Body of pancreas (tissue), 4 donors: ENCODE measurements at regions of chr18 and their contacts with region 1.

Region 1: GRCh38 chr18:79988451-79989194 is at the start of gene TXNL4A:
- DNase-seq: peak; percentile 85 to 88 (median 88)
- ATAC-seq: peak; percentile 98
- H3K4me3 ChIP-seq: peak within 1 kb of the TSS; percentile 90 to 92
- H3K27ac ChIP-seq: peak within 1 kb of the TSS; percentile 92 to 98 (median 96)
- H3K4me1 ChIP-seq: peaks cover 27% of the 10 kb centered on the region
- H3K27me3 ChIP-seq: no peaks in the 10 kb centered on the region
- CTCF ChIP-seq: peak in 1 of 7 experiments; percentile 6
- POLR2A ChIP-seq: peak; percentile 86 to 90 (median 88)
- total RNA-seq, gene TXNL4A: 11.2 to 13.5 TPM

Region 2: DNA sequence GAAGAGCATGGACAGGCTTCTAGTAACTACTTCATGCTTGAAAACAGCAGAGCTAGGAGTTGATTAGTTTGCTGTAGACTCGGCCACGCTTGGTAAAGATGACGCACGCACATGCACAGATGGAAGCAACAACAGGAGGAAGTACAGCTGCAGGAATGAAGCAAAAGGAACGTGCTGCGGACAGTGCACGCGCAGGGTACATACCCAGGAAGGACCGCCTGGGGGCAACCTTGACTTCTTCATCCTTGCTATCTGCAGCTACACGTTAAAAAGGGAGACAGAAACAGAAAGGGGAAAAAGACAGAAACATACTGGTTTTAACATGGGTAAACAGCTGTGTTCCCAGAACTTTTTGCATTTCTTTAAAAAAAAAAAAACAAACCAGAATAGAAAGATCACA is 54.9 kb before region 1 on chr18:
- intact Hi-C with region 1: loop called (anchors 10 kb)
- DNase-seq: peak; percentile 73 to 86 (median 83)
- ATAC-seq: peak; percentile 93
- H3K4me3 ChIP-seq: no peak overlapping the region
- H3K27ac ChIP-seq: peak overlapping the region in 3 of 4 donors; percentile 38 to 59 (median 58)
- H3K4me1 ChIP-seq: peaks cover 20% of the 10 kb centered on the region
- H3K27me3 ChIP-seq: no peaks in the 10 kb centered on the region
- CTCF ChIP-seq: peak; percentile 32 to 75 (median 60)
- POLR2A ChIP-seq: no peak